Heart left ventricle (tissue), 16 donors: ENCODE measurements at regions of chr17 and their contacts with region 1.

Region 1: GRCh38 chr17:47840740-47841603 is at the start of gene SCRN2:
- DNase-seq: peak; percentile 89 to 96 (median 91)
- ATAC-seq: peak; percentile 81 to 95 (median 92)
- H3K4me3 ChIP-seq: peak within 1 kb of the TSS; percentile 57 to 96 (median 90)
- H3K27ac ChIP-seq: peak within 1 kb of the TSS in 11 of 12 donors; percentile 55 to 84 (median 75)
- H3K4me1 ChIP-seq: peaks cover 4 to 28% (median 19%) of the 10 kb centered on the region in 12 donors
- H3K27me3 ChIP-seq: peaks cover 0 to 25% (median 8%) of the 10 kb centered on the region in 9 donors
- CTCF ChIP-seq: peak; percentile 93 to 99 (median 98)
- POLR2A ChIP-seq: no peak
- total RNA-seq, gene SCRN2: 29.4 to 42.9 (median 33.9) TPM

Region 2: DNA sequence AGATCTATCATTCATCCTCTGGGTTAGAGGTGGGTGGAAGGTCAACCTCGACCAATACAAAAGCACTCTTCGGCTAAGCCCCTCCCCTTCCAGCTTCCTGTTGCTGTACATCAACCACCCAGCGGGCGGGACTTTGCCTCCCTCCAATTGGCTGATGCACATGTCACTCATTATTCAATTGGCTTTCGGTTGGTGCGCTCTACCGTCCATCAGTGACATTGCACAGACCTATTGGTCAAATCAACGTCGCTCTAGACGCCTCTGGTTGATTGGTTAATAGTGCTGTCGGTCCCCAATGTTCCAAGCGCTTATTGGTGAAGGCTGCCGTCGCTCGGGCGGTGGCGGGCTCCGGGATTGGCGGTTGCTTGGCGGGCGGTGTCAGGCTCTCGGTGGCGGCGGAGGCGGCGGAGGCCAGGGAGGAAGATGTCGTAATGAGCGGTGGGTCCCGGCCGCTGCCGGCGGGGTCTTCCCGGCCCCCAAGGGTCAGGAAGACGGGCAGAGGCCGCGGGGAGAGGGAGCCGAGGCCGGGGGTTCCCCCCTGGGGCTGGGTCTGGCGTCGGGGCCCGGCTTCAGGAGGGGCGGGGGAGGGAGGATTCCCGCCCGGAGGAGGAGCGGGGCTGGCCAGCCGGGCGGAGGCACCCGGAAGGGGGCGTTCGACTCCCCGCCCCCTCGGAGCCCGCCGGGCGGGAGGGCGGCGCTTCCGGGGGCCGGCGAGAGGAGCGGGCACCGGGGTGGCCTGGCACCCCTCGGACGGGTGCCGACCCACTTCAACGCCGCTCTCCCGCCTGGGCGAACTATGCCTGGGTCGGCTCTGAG is 55.1 kb after region 1 on chr17 and contains the start of gene SP2:
- intact Hi-C with region 1: loop called in 4 of 10 experiments (anchors 1 to 2 kb)
- DNase-seq: peak; percentile 99 to 100 (median 99)
- ATAC-seq: peak; percentile 95 to 97 (median 96)
- H3K4me3 ChIP-seq: peak within 1 kb of the TSS; percentile 72 to 94 (median 79)
- H3K27ac ChIP-seq: peak within 1 kb of the TSS; percentile 98 to 100 (median 99)
- H3K4me1 ChIP-seq: peaks cover 0 to 58% (median 48%) of the 10 kb centered on the region in 12 donors
- H3K27me3 ChIP-seq: no peaks in the 10 kb centered on the region
- CTCF ChIP-seq: peak in 7 of 12 donors; percentile 3 to 53 (median 30)
- POLR2A ChIP-seq: peak; percentile 73 to 90
- total RNA-seq, gene SP2: 11.1 to 21.2 (median 16.7) TPM

Region 3: GRCh38 chr17:47949136-47949759 is 108.3 kb after region 1 on chr17:
- intact Hi-C with region 1: loop called in 8 of 10 experiments (anchors 5 to 10 kb)
- DNase-seq: peak; percentile 88 to 95 (median 89)
- ATAC-seq: peak; percentile 68 to 89 (median 84)
- H3K4me3 ChIP-seq: peak overlapping the region in 10 of 12 donors; percentile 31 to 49 (median 38)
- H3K27ac ChIP-seq: peak overlapping the region; percentile 23 to 76 (median 58)
- H3K4me1 ChIP-seq: peaks cover 5 to 53% (median 16%) of the 10 kb centered on the region in 12 donors
- H3K27me3 ChIP-seq: no peaks in the 10 kb centered on the region
- CTCF ChIP-seq: peak; percentile 85 to 96 (median 88)
- POLR2A ChIP-seq: peak in 1 of 2 donors; percentile 7

Region 4: DNA sequence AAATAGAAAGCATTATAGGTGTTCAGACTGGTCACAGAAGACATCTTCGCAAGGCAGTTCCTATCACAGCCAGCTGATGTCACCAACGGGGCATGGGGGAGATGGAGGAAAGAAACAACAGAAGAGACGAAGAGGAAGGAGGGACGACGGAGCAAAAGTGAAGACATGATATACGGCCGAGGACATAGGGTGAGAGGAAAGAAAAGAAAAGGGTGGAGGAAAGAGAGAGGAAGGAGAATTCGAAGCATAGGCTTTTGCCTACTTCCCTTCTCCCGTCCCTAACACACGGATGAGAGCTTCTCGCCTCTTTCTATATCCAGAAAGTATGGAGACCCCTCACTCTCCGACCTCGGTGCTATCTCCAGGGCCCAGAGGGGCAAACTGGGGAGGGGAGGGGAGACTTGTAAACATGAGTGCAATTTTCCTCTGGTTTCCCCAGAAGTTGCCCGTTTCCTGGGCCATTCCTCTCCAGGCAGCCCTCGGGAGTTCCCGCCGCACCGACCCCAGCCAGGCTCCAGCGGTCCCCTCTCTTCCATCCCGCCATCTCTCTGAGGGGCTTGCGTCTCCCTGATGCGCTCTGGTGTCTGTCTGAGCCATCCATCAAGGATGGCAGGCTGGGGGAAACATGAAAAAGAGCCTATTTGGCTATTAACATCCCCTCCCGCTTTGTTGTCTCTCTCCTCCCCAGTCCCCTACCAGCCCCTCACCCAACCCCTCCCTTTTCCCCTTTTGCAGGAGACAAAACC is 170.6 kb after region 1 on chr17:
- intact Hi-C with region 1: loop called in 5 of 10 experiments (anchors 5 to 10 kb)
- DNase-seq: peak in 1 of 5 donors; percentile 24
- ATAC-seq: peak in 1 of 4 donors; percentile 37
- H3K4me3 ChIP-seq: peak overlapping the region in 11 of 12 donors; percentile 18 to 52 (median 39)
- H3K27ac ChIP-seq: no peak overlapping the region
- H3K4me1 ChIP-seq: peaks cover 0 to 17% (median 7%) of the 10 kb centered on the region in 12 donors
- H3K27me3 ChIP-seq: peaks cover 0 to 51% (median 20%) of the 10 kb centered on the region in 9 donors
- CTCF ChIP-seq: peak in 7 of 12 donors; percentile 5 to 41 (median 16)
- POLR2A ChIP-seq: no peak

Region 5: GRCh38 chr17:48084932-48085444 is 244.0 kb after region 1 on chr17:
- intact Hi-C with region 1: no loop called
- DNase-seq: no peak
- ATAC-seq: no peak
- H3K4me3 ChIP-seq: no peak overlapping the region
- H3K27ac ChIP-seq: no peak overlapping the region
- H3K4me1 ChIP-seq: peaks cover 0 to 15% (median 9%) of the 10 kb centered on the region in 12 donors
- H3K27me3 ChIP-seq: no peaks in the 10 kb centered on the region
- CTCF ChIP-seq: no peak
- POLR2A ChIP-seq: no peak